ENCODE measurements at regions of chr16 and their contacts with region 1.

Region 1: GRCh38 chr16:80824718-80825364 is 20.4 kb upstream of the CDYL2 start:
- DNase-seq: peak; percentile 44
- CTCF ChIP-seq: peak; percentile 72

Region 2: DNA sequence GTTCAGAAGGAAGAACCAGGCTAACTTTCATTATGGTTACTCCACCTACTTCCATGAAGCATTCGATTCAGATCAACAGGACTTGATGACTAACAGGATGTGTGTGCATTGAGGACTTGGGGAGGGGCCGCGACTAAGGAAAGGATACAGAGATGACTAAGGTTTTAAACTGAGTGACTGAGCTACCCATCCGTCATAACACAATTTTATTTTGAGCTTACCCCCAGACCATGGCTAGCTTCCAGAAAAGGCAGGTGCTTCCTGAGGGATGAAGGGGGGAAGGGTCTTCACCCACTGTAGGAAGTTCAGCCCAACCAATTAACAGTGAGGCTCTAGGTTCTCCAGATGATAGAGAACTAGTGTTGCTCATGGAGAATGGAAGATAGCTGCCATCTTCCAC is 17.9 kb before region 1 on chr16:
- CTCF ChIA-PET with region 1: interaction called, 11 read pairs
- POLR2A ChIA-PET with region 1: no interaction called
- DNase-seq: no peak
- CTCF ChIP-seq: no peak

Region 3: DNA sequence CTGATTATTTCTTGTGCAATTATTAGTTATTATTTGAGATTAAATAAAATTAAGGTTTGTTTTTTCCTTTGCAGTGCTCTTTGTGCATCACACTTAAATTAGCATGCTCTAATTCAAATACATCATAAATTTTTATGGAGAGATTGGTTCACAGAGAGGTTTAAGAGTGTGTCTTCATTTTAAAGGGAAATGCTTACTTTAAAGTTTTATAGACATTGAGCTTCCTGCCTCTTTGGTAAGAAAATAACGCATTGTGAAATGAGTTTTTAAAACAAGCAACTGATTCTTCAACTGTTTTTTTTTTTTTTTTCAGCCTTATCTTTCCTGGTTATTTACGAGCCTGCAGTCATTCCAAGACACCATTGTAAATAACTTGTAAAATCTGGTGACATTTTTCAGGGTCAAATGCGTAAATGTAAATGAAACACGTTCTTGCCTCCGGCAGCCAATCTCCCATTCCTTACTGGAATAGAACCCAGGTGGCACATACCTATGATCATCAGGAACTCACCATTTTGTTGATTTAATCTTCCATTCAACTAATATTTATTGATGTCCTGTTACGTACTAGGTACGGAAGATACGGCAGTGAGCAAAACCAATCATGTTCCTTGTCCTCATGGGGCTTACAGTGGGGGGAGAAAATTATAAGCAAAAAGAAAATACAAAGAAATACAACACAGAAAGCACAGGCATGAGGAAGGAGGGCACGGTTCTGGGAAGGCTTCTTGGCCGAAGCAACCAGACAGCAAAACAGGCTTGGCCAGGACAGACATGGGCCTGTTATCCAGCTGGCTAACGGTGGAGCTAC is 12.8 kb after region 1 on chr16:
- CTCF ChIA-PET with region 1: interaction called, 11 read pairs
- POLR2A ChIA-PET with region 1: no interaction called
- DNase-seq: no peak
- CTCF ChIP-seq: no peak

Measured in GM10248 (cell line).